ENCODE measurements at regions of chr7 and their contacts with region 1.

Region 1: DNA sequence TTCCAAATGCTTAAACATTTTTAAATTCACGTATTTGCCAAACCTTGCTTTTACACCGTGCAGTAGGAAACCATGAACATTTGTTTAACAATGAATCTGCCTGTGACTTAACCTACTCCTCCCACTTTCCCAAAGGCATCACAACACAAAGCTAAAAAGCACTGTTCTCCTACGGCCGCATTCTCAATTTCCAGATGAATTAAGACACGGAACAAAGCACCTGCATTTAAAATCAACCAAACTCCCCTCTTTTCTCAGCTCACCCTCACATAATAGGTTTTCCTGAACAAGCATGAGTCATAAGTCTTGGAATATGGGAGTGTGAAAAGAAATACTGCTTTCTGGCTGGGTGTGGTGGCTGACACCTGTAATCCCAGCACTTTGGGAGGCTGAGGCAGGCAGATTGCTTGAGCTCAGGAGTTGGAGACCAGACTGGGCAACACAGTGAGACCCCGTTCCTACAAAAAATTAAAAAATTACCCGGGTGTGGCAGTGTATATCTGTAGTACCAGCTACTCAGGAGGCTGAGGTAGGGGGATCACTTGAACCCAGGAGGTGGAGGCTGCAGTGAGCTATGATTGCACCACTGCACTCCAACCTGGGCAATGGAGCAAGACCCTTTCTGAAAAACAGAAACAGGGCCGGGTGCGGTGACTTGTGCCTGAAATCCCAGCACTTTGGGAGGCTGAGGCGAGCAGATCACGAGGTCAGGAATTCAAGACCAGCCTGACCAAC is 51.7 kb upstream of the CYTH3 start:
- DNase-seq: no peak
- ATAC-seq: no peak

Region 2: DNA sequence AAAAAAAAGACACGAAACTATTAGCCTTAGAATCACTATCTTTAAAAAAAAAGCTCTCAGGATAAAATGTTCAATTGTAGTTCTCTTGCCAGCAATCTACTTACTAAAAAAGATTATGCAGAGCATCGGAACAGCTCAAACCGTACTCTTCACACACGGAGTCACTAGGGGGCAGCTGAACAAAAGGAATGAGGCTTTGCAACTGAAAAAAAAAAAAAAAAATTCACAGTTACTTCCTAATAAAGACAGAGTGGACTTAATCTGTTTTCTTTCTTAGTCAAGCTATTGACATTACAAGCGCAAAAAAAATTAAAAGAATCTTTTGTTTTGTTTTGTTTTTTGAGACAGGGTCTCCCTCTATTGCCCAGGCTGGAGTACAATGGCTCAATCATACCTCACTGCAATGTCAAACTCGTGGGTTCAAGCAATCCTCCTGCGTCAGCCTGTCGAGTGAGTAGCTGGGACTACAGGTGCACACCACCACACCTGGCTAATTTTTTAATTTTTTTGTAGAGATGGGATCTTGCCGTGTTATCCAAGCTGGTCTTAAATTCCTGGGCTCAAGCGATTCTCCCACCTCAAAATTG is 326.8 kb before region 1 on chr7:
- intact Hi-C with region 1: loop called in 1 of 2 experiments (anchors 10 kb)
- DNase-seq: peak; percentile 32
- ATAC-seq: peak; percentile 50 to 81

Region 3: DNA sequence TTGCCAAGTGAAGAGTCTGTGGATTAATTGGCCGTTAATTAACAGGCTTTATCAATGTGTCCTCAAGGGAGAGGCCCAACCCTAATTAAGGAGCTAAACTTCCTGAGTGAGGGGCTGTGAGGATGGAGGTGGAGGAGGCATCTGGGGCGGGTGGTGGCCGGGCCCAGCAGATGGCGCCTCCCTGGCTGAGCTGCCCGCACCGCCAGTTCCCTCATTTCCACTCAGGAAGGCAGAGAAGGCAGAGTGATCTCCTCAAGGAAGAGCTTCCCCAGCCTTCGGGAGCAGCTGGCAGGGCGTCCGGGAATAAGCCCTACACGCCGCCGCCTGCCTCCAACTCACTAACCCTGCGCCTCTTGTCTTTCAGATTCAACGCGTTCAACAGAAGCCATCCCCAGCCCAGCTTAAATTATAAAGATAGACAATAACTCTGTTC is 163.9 kb before region 1 on chr7:
- intact Hi-C with region 1: loop called (anchors 2 kb)
- DNase-seq: peak; percentile 77
- ATAC-seq: peak; percentile 75 to 78

Region 4: GRCh38 chr7:6577365-6578113 is 253.4 kb after region 1 on chr7 and contains the start of gene ZDHHC4:
- intact Hi-C with region 1: no loop called
- DNase-seq: peak; percentile 95
- ATAC-seq: peak; percentile 98 to 99
- total RNA-seq, gene ZDHHC4: 36.5 to 43.0 TPM